ENCODE measurements at regions of chr17 and their contacts with region 1.

Region 1: GRCh38 chr17:19648475-19649406 is at the start of gene ALDH3A2:
- DNase-seq: peak; percentile 92 to 96
- ATAC-seq: peak; percentile 88 to 91
- H3K4me3 ChIP-seq: peak within 1 kb of the TSS; percentile 75 to 93 (median 84)
- H3K27ac ChIP-seq: peak within 1 kb of the TSS; percentile 92 to 97 (median 96)
- H3K4me1 ChIP-seq: peaks cover 50 to 52% of the 10 kb centered on the region in 2 donors
- H3K27me3 ChIP-seq: no peaks in the 10 kb centered on the region
- CTCF ChIP-seq: peak in 4 of 5 experiments; percentile 10 to 43 (median 34)
- POLR2A ChIP-seq: peak; percentile 91 to 93
- total RNA-seq, gene ALDH3A2: 87.6 to 117 (median 98.2) TPM

Region 2: DNA sequence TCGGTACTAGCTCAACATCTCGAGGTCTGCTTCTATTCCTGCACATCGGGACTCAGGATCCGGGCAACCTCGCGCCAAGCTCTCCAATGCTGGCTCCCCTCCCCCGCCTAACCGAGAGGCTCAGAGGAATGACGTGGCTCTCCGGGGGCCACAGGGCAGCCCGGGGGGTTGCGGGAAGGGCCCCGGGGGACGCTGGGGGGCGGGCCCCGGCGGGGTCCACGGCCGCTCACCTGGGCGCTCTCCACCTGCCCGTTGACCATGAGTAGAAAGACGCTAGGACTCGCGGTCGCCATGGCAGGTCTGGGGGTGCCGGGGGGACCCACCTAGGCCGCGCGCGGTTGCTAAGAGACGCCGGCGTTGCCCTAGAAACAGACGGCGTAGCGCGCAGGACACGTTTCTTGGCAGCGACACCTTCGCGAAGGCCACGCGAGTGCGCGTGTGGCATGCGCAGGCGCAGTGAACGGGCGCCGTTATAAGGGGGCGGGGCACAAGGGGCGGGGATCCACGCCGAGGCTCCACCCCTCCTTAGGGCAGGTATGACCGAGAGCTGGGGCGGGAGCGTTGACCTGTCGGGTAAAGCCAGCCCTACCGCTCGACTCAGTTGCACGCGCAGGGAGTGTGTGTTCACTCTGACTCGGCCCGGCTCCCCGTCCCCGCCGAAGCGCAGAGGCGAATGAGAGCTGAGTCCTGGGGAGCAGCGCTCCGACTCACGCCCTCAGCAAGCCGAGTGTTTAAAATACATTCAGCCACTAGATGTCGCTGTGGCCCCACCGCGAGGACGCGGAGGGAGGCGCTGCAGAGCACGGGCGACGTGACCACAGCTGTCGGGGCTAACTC is 286.2 kb before region 1 on chr17 and contains the start of gene B9D1:
- in situ Hi-C with region 1: loop called in 1 of 4 experiments (anchors 25 kb)
- intact Hi-C with region 1: loop called (anchors 5 kb)
- DNase-seq: peak; percentile 86 to 93
- ATAC-seq: peak; percentile 96 to 97
- H3K4me3 ChIP-seq: peak within 1 kb of the TSS; percentile 60 to 86 (median 72)
- H3K27ac ChIP-seq: peak within 1 kb of the TSS; percentile 79 to 92 (median 84)
- H3K4me1 ChIP-seq: peaks cover 4 to 9% of the 10 kb centered on the region in 2 donors
- H3K27me3 ChIP-seq: no peaks in the 10 kb centered on the region
- CTCF ChIP-seq: peak; percentile 99
- POLR2A ChIP-seq: peak in 1 of 2 donors; percentile 44
- total RNA-seq, gene B9D1: 6.5 to 16.4 (median 14.5) TPM

Region 3: GRCh38 chr17:19507775-19508576 is 140.8 kb before region 1 on chr17:
- in situ Hi-C with region 1: loop called (anchors 10 to 25 kb)
- intact Hi-C with region 1: no loop called
- DNase-seq: peak; percentile 71 to 78
- ATAC-seq: peak; percentile 84 to 94
- H3K4me3 ChIP-seq: peak overlapping the region; percentile 69 to 93 (median 77)
- H3K27ac ChIP-seq: peak overlapping the region; percentile 76 to 88 (median 82)
- H3K4me1 ChIP-seq: no peaks in the 10 kb centered on the region
- H3K27me3 ChIP-seq: peaks cover 0 to 4% (median 0%) of the 10 kb centered on the region in 3 donors
- CTCF ChIP-seq: no peak
- POLR2A ChIP-seq: peak; percentile 19 to 38

Region 4: DNA sequence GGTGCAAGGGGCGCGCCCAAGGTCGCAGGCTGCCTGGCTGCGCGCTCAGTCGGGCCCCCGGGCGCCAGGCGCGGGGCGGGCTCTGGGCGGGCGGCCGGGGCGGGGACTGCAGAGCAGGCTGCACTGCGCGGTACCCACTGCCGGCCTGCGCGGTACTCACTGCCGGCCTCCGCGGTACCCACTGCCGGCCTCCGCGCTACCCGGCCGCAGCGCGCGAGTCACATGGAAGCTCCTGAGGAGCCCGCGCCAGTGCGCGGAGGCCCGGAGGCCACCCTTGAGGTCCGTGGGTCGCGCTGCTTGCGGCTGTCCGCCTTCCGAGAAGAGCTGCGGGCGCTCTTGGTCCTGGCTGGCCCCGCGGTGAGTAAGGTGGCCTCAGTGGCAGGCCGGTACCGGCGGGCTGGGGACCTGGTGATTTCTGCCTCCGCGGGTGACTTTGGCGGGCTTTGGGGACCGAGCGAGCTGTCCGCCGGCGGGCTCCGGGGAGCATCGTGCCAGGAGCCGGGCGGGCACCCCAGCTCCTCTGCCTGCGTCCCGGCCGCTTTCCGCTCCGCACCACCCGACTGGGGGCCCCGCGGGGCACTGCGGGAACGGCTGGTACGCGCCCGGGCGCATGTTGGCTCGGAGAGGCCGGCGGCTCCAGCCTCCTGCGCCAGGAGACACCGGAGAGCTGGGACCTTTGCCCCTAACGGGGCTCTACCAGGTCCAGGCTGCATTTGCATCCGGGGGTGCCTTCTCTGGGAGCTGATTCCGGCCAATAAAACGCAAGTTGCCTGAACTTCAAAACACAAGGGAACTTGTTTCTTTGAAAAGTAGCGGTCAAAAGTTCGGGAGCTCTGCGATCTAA is 114.8 kb before region 1 on chr17 and contains the start of gene SLC47A1:
- in situ Hi-C with region 1: no loop called
- intact Hi-C with region 1: loop called (anchors 5 kb)
- DNase-seq: peak in 1 of 2 donors; percentile 56
- ATAC-seq: peak; percentile 44 to 48
- H3K4me3 ChIP-seq: peak within 1 kb of the TSS; percentile 72 to 89 (median 80)
- H3K27ac ChIP-seq: peak within 1 kb of the TSS; percentile 89 to 94 (median 91)
- H3K4me1 ChIP-seq: peaks cover 42 to 43% of the 10 kb centered on the region in 2 donors
- H3K27me3 ChIP-seq: no peaks in the 10 kb centered on the region
- CTCF ChIP-seq: no peak
- POLR2A ChIP-seq: peak; percentile 62 to 67
- total RNA-seq, gene SLC47A1: 34.2 to 257 (median 133) TPM

Region 5: DNA sequence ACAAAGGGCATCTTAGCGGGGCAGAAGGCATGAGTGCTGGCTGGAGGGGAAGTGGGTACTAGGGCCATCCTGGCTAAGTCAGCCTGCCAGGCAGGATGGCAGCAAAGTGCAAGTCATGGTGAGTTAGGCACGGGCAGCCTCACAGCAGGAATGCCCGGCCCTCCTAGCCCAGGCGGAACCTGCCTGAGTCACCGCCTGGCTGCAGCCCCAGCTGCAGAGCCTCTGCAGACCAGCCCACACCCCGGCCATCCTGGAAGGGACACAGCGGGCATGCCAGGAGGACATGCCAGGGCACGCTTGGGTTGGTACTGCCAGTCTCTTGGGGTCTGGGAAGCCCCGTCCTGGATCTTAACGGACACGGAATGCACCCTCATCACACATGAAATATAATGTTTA is 104.3 kb after region 1 on chr17:
- in situ Hi-C with region 1: no loop called
- intact Hi-C with region 1: loop called (anchors 1 kb)
- DNase-seq: peak; percentile 87 to 93
- ATAC-seq: peak; percentile 83 to 84
- H3K4me3 ChIP-seq: peak overlapping the region in 1 of 4 donors; percentile 7
- H3K27ac ChIP-seq: peak overlapping the region; percentile 83 to 94 (median 92)
- H3K4me1 ChIP-seq: peaks cover 17 to 33% of the 10 kb centered on the region in 2 donors
- H3K27me3 ChIP-seq: no peaks in the 10 kb centered on the region
- CTCF ChIP-seq: no peak
- POLR2A ChIP-seq: peak; percentile 21 to 35

Region 6: DNA sequence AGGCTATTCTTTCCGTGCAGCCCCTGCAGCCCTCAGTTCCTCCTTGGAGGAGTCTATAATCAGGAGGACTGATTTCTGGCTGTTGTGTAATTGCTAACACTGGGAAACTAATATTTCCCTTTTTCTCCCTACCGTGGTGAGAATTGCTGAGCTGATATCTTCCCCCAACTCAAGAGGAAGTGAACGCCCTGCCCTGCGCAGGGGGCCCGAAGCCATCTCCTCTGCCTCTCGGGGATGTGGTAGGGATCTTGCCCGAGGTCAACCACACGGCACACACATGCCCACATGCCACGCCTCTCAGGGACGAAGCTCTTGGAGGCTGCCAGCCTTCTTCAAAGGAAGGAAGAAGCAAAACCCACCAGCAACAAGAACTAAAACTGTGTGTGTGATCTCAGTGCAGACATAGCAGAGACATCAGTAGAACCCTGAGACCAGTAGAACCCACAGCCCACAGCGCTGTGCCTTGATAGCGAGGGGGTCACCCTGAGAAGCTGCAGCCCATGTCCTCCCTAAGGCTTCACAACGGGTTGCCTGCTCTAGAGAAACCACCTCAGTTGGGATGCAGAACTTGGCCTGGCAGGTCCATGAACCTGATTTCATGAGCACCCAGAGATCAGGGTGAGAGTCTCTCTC is 227.9 kb after region 1 on chr17:
- in situ Hi-C with region 1: no loop called
- intact Hi-C with region 1: no loop called
- DNase-seq: peak; percentile 40 to 49
- ATAC-seq: no peak
- H3K4me3 ChIP-seq: no peak overlapping the region
- H3K27ac ChIP-seq: no peak overlapping the region
- H3K4me1 ChIP-seq: no peaks in the 10 kb centered on the region
- H3K27me3 ChIP-seq: no peaks in the 10 kb centered on the region
- CTCF ChIP-seq: no peak
- POLR2A ChIP-seq: no peak